ENCODE measurements at regions of chr1 and their contacts with region 1.

Region 1: GRCh38 chr1:193104906-193105820 is at the start of gene GLRX2:
- DNase-seq: no peak
- H3K4me3 ChIP-seq: peak within 1 kb of the TSS; percentile 75
- CTCF ChIP-seq: peak; percentile 0

Region 2: GRCh38 chr1:193025218-193025617 is 79.9 kb before region 1 on chr1:
- CTCF ChIA-PET with region 1: no interaction called
- POLR2A ChIA-PET with region 1: no interaction called
- DNase-seq: no peak
- H3K4me3 ChIP-seq: no peak overlapping the region
- CTCF ChIP-seq: no peak

Region 3: GRCh38 chr1:193059268-193060225 is 45.6 kb before region 1 on chr1 and contains the starts of genes RO60 and UCHL5:
- CTCF ChIA-PET with region 1: no interaction called
- POLR2A ChIA-PET with region 1: interaction called, 10 read pairs
- DNase-seq: peak; percentile 92
- H3K4me3 ChIP-seq: peak within 1 kb of the TSS; percentile 93
- CTCF ChIP-seq: no peak

Region 4: GRCh38 chr1:193140254-193140653 is 35.1 kb after region 1 on chr1:
- CTCF ChIA-PET with region 1: no interaction called
- POLR2A ChIA-PET with region 1: no interaction called
- DNase-seq: no peak
- H3K4me3 ChIP-seq: no peak overlapping the region
- CTCF ChIP-seq: no peak

Region 5: DNA sequence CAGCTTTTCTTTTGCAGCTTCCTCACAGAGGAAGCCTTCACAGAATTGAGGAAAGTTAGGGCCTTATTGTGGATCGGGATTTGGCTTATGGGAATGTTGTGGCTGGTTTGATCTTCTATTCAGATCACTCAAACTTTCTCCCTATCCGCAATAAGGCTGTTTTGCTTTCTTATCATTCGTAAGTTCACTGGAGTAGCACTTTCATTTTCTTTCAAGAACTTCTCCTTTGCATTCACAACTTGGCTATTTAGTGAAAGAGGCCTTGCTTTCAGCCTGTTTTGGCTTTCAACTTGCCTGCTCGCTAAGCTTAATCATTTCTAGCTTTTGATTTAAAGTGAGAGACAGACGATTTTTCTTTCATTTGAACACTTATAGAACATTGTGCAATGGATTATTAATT is 263.1 kb after region 1 on chr1:
- CTCF ChIA-PET with region 1: no interaction called
- POLR2A ChIA-PET with region 1: no interaction called
- DNase-seq: no peak
- H3K4me3 ChIP-seq: no peak overlapping the region
- CTCF ChIP-seq: no peak

Region 6: GRCh38 chr1:193700710-193701355 is 595.7 kb after region 1 on chr1:
- CTCF ChIA-PET with region 1: no interaction called
- POLR2A ChIA-PET with region 1: no interaction called
- DNase-seq: peak; percentile 34
- H3K4me3 ChIP-seq: no peak overlapping the region
- CTCF ChIP-seq: no peak